CD8-positive, alpha-beta memory T cell (primary cell): ENCODE measurements at regions of chr16 and their contacts with region 1.

Region 1: DNA sequence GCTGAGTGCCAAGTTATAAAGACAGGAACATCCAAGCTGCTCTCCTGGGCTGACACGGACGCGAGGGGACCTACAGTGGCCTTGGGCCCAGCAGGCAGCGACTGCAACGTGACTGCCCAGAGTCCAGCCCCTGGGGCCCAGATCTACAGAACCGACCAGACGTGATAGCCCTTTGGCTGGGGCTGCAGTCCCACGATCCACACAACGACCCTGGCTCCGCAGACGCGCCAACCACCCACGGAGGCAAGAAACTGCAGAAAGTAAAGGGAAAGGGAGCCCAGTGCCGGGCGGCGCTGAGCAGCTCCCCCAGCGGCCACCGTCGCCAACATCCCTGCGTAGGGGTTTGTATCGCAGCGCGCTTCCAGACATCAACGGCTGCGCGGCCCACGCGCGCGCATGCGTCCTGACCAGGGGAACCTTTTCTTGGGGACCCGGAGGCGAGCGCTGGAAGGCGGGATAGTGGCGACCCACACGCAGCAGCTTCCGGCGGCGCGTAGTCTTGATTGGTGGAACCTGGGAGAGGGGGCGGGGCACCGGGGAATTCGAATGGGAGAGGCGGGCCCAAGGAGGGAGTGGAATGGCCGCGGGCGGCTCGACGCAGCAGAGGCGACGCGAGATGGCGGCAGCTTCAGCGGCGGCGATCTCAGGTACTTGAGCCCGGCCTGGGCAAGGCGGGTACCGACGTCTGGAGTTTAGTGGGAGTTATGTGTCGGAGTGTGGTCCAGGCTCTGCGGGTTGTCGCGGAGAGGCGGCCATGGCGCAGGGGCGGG is at the start of gene KIF22:
- DNase-seq: peak; percentile 99 to 100 (median 100)
- H3K4me3 ChIP-seq: peak within 1 kb of the TSS; percentile 95
- H3K4me3 Mint-ChIP-seq: peak within 1 kb of the TSS; percentile 94 to 99 (median 99)
- H3K27ac ChIP-seq: peak within 1 kb of the TSS; percentile 85
- H3K27ac Mint-ChIP-seq: peak within 1 kb of the TSS; percentile 94 to 99 (median 98)
- H3K4me1 ChIP-seq: peaks cover 43% of the 10 kb centered on the region
- H3K4me1 Mint-ChIP-seq: peaks cover 40 to 61% (median 47%) of the 10 kb centered on the region in 3 donors
- H3K27me3 ChIP-seq: no peaks in the 10 kb centered on the region
- H3K27me3 Mint-ChIP-seq: peaks cover 0 to 4% of the 10 kb centered on the region in 2 donors
- total RNA-seq, gene KIF22: 118 to 131 TPM

Region 2: GRCh38 chr16:29738514-29738913 is 51.9 kb before region 1 on chr16:
- CTCF ChIA-PET with region 1: interaction called, 28 read pairs
- POLR2A ChIA-PET with region 1: interaction called, 24 read pairs
- DNase-seq: peak; percentile 35 to 80 (median 79)
- H3K4me3 ChIP-seq: no peak overlapping the region
- H3K4me3 Mint-ChIP-seq: peak overlapping the region; percentile 24 to 78 (median 67)
- H3K27ac ChIP-seq: peak overlapping the region; percentile 21
- H3K27ac Mint-ChIP-seq: peak overlapping the region; percentile 89 to 98 (median 96)
- H3K4me1 ChIP-seq: peaks cover 78% of the 10 kb centered on the region
- H3K4me1 Mint-ChIP-seq: peaks cover 78 to 85% (median 82%) of the 10 kb centered on the region in 3 donors
- H3K27me3 ChIP-seq: no peaks in the 10 kb centered on the region
- H3K27me3 Mint-ChIP-seq: no peaks in the 10 kb centered on the region

Region 3: DNA sequence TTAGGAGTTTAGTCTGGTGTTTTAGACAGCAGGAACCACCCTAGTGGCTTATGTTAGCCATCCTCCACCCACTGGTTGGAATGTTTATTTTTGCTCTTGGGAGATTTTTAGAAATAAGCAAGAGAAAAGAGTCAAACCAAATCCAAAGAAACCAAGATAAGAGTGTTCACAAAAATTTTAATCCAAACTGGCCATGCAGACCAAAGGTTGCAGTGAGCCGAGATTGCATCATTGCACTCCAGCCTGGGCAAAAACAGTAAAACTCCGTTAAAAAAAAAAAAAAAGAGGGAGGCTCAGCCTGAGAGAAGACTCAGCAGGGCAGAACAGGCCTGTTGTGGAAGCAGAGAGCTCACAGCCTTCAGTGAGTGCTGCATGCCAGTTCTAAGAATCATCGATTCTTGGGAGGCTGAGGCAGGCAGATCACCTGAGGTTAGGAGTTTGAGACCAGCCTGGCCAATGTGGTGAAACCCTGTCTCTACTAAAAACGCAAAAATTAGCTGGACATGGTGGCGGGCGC is 32.4 kb before region 1 on chr16:
- CTCF ChIA-PET with region 1: interaction called, 14 read pairs
- POLR2A ChIA-PET with region 1: interaction called, 4 read pairs
- DNase-seq: no peak
- H3K4me3 ChIP-seq: no peak overlapping the region
- H3K4me3 Mint-ChIP-seq: no peak overlapping the region
- H3K27ac ChIP-seq: no peak overlapping the region
- H3K27ac Mint-ChIP-seq: no peak overlapping the region
- H3K4me1 ChIP-seq: peaks cover 22% of the 10 kb centered on the region
- H3K4me1 Mint-ChIP-seq: peaks cover 9 to 33% (median 19%) of the 10 kb centered on the region in 3 donors
- H3K27me3 ChIP-seq: no peaks in the 10 kb centered on the region
- H3K27me3 Mint-ChIP-seq: no peaks in the 10 kb centered on the region

Region 4: DNA sequence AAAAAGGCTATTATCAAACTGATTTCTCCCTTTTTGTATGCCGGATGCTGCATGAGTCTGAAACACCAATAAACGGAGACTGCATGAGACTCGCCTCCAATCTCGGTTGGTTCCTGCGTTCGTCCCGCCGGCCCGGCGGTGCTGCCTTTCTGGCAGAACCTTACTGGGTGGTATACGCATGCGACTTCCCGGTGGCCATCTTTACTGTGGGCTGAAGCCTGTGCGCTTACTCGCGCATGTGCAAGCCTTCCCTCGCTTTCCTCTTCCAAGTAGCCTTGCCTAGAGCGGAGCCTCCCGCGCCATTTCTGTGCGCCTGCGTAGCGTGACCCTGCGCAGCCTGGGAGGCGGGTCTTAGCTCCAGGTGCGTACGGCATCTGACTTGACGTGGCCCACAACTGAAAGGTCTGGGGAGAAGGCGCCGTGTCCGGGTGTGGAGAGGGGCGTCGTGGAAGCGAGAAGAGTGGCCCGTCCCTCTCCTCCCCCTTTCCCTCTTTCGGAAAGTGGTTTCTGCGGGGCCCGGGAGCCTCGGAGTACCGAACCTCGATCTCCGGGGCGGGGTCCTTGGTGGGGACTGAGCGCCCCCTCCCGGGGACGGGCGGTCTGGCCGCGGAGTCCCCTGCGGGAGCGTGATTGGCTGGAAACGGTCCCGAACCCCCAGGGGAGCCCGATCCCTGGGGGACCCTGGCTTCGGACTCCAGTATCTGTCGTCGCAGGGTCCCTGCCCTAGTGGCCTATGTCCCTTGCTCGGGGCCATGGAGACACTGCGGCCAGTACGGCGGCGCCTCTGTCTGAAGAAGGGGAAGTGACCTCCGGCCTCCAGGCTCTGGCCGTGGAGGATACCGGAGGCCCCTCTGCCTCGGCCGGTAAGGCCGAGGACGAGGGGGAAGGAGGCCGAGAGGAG is 25.7 kb after region 1 on chr16 and contains the start of gene PAGR1:
- CTCF ChIA-PET with region 1: interaction called, 20 read pairs
- POLR2A ChIA-PET with region 1: interaction called, 46 read pairs
- DNase-seq: peak; percentile 95 to 99 (median 99)
- H3K4me3 ChIP-seq: peak within 1 kb of the TSS; percentile 94
- H3K4me3 Mint-ChIP-seq: peak within 1 kb of the TSS; percentile 89 to 99 (median 93)
- H3K27ac ChIP-seq: peak within 1 kb of the TSS; percentile 89
- H3K27ac Mint-ChIP-seq: peak within 1 kb of the TSS; percentile 93 to 99 (median 98)
- H3K4me1 ChIP-seq: peaks cover 54% of the 10 kb centered on the region
- H3K4me1 Mint-ChIP-seq: peaks cover 53 to 79% (median 62%) of the 10 kb centered on the region in 3 donors
- H3K27me3 ChIP-seq: no peaks in the 10 kb centered on the region
- H3K27me3 Mint-ChIP-seq: peaks cover 0 to 4% of the 10 kb centered on the region in 2 donors
- total RNA-seq, gene PAGR1: 41.9 to 44.3 TPM